ENCODE measurements at regions of chr4 and their contacts with region 1.

Region 1: GRCh38 chr4:25159884-25160713 is at the start of gene SEPSECS:
- DNase-seq: peak; percentile 84
- ATAC-seq: peak; percentile 79
- H3K4me3 Mint-ChIP-seq: peak within 1 kb of the TSS; percentile 89
- H3K27ac Mint-ChIP-seq: peak within 1 kb of the TSS; percentile 91
- H3K4me1 Mint-ChIP-seq: peaks cover 36% of the 10 kb centered on the region
- H3K27me3 Mint-ChIP-seq: no peaks in the 10 kb centered on the region
- CTCF ChIP-seq: no peak
- total RNA-seq, gene SEPSECS: 9.9 and 12.4 TPM in 2 replicates

Region 2: GRCh38 chr4:24584175-24584850 is 575.8 kb before region 1 on chr4 and contains the start of gene DHX15:
- CTCF ChIA-PET with region 1: no interaction called
- POLR2A ChIA-PET with region 1: interaction called, 16 read pairs
- intact Hi-C with region 1: loop called (anchors 1 kb)
- DNase-seq: peak; percentile 88
- ATAC-seq: peak; percentile 93
- H3K4me3 Mint-ChIP-seq: peak within 1 kb of the TSS; percentile 98
- H3K27ac Mint-ChIP-seq: peak within 1 kb of the TSS; percentile 91
- H3K4me1 Mint-ChIP-seq: peaks cover 39% of the 10 kb centered on the region
- H3K27me3 Mint-ChIP-seq: no peaks in the 10 kb centered on the region
- CTCF ChIP-seq: no peak
- total RNA-seq, gene DHX15: 145 and 163 TPM in 2 replicates

Region 3: GRCh38 chr4:25190407-25190806 is 30.3 kb after region 1 on chr4:
- CTCF ChIA-PET with region 1: no interaction called
- POLR2A ChIA-PET with region 1: no interaction called
- intact Hi-C with region 1: no loop called
- DNase-seq: no peak
- ATAC-seq: no peak
- H3K4me3 Mint-ChIP-seq: no peak overlapping the region
- H3K27ac Mint-ChIP-seq: no peak overlapping the region
- H3K4me1 Mint-ChIP-seq: no peaks in the 10 kb centered on the region
- H3K27me3 Mint-ChIP-seq: no peaks in the 10 kb centered on the region
- CTCF ChIP-seq: no peak

Region 4: DNA sequence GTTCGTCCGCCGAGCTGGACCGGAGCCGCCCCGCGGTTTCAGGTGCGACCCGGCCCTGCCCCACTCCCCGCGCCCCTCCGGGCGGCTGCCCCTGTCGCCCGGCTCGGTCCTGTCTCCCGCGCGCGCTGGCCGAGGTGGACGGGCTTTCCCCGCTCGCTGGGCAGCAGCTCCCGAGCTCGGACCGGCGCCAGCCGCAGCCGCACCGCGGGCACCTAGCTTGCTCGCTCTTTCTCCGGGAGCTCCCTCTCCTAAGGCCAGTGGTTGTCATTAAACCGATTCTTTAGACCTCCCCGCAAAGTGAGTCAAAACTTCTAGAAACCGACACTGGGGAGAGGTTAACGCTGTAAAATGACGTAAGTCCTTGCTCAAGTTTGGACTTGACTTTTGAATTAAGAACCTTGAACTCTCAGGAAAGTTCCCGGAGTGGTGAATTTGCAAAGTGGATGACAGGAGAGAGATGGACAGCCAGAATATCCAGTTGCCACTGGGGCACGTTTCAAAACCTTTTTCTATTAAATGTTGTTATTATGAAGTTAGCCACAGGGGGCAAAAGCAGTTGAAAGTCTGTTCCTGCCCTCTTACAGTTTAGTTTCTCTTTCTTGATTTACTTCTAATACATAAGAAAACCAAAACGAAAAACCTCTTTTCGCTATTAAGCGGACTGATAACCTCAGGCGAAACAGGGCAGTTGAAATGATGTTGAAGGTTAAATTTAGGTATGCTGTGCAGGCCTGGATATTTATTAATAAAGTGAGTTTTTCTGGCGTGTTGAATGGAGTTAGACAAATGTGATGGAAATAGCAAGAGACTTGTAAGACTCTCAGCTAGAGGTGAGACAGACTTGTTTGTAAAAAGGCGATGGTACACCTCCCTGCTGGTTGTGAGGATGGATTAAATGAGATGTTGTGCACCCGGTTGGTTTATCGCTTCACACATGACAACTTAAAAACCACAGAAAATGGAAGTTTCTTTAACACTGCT is 74.6 kb after region 1 on chr4:
- CTCF ChIA-PET with region 1: interaction called, 6 read pairs
- POLR2A ChIA-PET with region 1: interaction called, 43 read pairs
- intact Hi-C with region 1: loop called (anchors 1 kb)
- DNase-seq: no peak
- ATAC-seq: peak; percentile 53
- H3K4me3 Mint-ChIP-seq: peak overlapping the region; percentile 90
- H3K27ac Mint-ChIP-seq: peak overlapping the region; percentile 95
- H3K4me1 Mint-ChIP-seq: peaks cover 47% of the 10 kb centered on the region
- H3K27me3 Mint-ChIP-seq: no peaks in the 10 kb centered on the region
- CTCF ChIP-seq: no peak

Region 5: GRCh38 chr4:25312496-25313200 is 152.5 kb after region 1 on chr4 and contains the start of gene ZCCHC4:
- CTCF ChIA-PET with region 1: interaction called, 20 read pairs
- POLR2A ChIA-PET with region 1: interaction called, 30 read pairs
- intact Hi-C with region 1: loop called (anchors 1 kb)
- DNase-seq: peak; percentile 95
- ATAC-seq: peak; percentile 99
- H3K4me3 Mint-ChIP-seq: peak within 1 kb of the TSS; percentile 98
- H3K27ac Mint-ChIP-seq: peak within 1 kb of the TSS; percentile 95
- H3K4me1 Mint-ChIP-seq: peaks cover 45% of the 10 kb centered on the region
- H3K27me3 Mint-ChIP-seq: no peaks in the 10 kb centered on the region
- CTCF ChIP-seq: peak; percentile 90
- total RNA-seq, gene ZCCHC4: 14.7 and 19.1 TPM in 2 replicates

Region 6: DNA sequence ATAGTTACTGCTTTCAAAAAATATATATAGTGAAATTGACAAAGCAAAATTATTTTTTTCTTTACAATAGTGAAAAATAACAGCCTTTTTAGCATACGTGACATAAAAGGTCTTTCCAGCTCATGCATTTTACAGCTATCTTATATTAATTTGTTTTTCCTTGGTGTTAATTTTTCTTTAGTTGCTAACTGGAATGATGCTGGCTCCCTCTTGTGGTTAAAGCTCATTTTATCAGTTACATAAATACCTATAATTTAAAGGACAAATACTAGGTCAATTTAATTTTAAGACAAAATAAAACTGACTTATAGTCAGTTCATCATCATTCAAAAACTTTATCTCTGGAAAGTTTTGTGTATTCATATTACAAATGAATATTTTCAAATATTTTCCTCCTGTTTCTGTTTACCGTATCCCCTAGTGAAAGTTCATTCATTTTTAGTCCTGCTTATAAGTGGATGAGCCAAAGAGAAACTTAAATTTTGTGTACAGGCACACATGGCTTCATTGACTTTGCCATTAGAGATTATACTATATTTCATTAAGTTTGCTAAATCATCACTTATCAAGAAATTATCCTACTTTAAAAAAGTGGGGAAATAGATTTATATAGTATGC is 207.0 kb after region 1 on chr4:
- CTCF ChIA-PET with region 1: interaction called, 3 read pairs
- POLR2A ChIA-PET with region 1: no interaction called
- intact Hi-C with region 1: loop called (anchors 1 kb)
- DNase-seq: no peak
- ATAC-seq: no peak
- H3K4me3 Mint-ChIP-seq: no peak overlapping the region
- H3K27ac Mint-ChIP-seq: no peak overlapping the region
- H3K4me1 Mint-ChIP-seq: no peaks in the 10 kb centered on the region
- H3K27me3 Mint-ChIP-seq: no peaks in the 10 kb centered on the region
- CTCF ChIP-seq: no peak

Region 7: GRCh38 chr4:25376754-25377571 is 216.9 kb after region 1 on chr4 and contains the start of gene ANAPC4:
- CTCF ChIA-PET with region 1: no interaction called
- POLR2A ChIA-PET with region 1: interaction called, 9 read pairs
- intact Hi-C with region 1: loop called (anchors 1 kb)
- DNase-seq: peak; percentile 95
- ATAC-seq: peak; percentile 94
- H3K4me3 Mint-ChIP-seq: no peak within 1 kb of the TSS
- H3K27ac Mint-ChIP-seq: peak within 1 kb of the TSS; percentile 81
- H3K4me1 Mint-ChIP-seq: peaks cover 5% of the 10 kb centered on the region
- H3K27me3 Mint-ChIP-seq: no peaks in the 10 kb centered on the region
- CTCF ChIP-seq: no peak
- total RNA-seq, gene ANAPC4: 36.8 and 37.0 TPM in 2 replicates

Region 8: DNA sequence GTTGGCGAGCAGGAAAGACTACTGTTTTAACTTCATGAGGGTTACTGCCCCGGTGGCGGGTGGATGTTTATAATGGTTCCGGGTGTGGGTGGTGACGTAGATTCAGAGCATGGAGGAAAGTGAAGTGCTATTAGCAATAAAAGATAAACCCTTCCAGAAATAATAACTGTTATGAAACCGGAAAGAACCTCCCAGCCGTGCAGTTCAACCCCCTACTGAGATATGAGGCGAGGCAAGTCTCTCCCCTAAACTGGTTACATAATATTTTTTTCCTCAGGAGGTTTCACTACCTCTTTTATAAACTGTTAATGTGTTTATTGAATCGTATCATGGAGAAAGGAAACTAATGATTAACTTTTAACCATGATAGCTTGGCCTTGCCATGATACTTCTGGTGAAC is 1666.6 kb after region 1 on chr4:
- CTCF ChIA-PET with region 1: no interaction called
- POLR2A ChIA-PET with region 1: no interaction called
- intact Hi-C with region 1: loop called (anchors 10 kb)
- DNase-seq: peak; percentile 47
- ATAC-seq: peak; percentile 84
- H3K4me3 Mint-ChIP-seq: peak overlapping the region; percentile 59
- H3K27ac Mint-ChIP-seq: peak overlapping the region; percentile 88
- H3K4me1 Mint-ChIP-seq: peaks cover 92% of the 10 kb centered on the region
- H3K27me3 Mint-ChIP-seq: peaks cover 9% of the 10 kb centered on the region
- CTCF ChIP-seq: no peak